ENCODE measurements at regions of chr3 and their contacts with region 1.

Region 1: DNA sequence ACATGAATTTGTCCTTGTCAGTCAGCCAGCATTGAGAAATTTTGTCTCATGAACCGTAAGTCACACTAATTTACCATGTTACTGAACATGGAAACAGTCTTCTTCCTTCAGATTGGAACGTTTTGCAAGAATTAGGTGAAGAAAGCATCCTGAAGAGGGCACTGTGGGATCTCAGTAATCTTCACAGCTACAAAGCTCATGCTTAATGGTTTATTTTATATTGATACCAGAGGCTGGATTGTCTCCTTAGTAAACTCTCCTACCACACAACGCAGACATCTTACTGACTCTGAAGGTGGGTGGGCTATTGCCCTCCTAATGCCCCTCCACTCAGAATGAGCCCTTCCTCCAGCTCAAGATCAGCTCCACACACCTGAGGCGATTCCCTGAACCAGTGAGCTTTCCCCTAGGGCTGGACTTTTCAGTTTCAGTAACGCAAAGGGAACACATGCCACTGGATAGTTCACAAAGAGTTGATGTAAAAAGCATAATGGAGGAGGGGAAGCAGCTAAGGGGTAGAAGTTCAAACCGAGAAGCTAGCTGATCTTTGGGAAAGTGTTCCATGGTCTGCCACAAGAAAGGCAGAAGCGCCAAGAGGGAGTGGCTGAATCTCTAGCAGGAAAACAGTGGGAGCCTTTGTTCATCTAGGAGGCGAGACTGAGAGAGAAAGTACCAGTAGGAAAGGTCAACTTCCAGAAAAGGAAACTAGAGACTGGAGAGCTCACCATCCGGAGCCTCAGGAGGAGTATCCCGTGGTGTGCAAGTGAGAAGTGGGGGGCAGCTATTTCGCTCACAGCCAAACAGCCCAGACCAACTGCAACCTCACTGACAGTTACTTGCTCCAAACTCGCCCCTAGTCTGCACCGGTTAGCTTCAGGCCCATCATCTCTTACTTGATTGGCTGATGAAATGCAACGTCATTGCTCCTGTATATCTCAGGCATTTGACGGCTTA is at the start of gene SLC9C1:
- DNase-seq: peak in 7 of 9 donors; percentile 32 to 66 (median 49)
- ATAC-seq: peak; percentile 84
- H3K4me3 ChIP-seq: peak within 1 kb of the TSS; percentile 25
- H3K4me3 Mint-ChIP-seq: peak within 1 kb of the TSS; percentile 49 to 80 (median 70)
- H3K27ac ChIP-seq: no peak within 1 kb of the TSS
- H3K27ac Mint-ChIP-seq: peak within 1 kb of the TSS; percentile 4 to 83 (median 56)
- H3K4me1 ChIP-seq: no peaks in the 10 kb centered on the region
- H3K4me1 Mint-ChIP-seq: peaks cover 17 to 37% (median 27%) of the 10 kb centered on the region in 7 donors
- H3K27me3 ChIP-seq: no peaks in the 10 kb centered on the region
- H3K27me3 Mint-ChIP-seq: no peaks in the 10 kb centered on the region
- total RNA-seq, gene SLC9C1: not detected

Region 2: GRCh38 chr3:112128843-112129727 is 164.6 kb before region 1 on chr3:
- CTCF ChIA-PET with region 1: interaction called, 7 read pairs
- POLR2A ChIA-PET with region 1: interaction called, 3 read pairs
- intact Hi-C with region 1: loop called in 1 of 2 experiments (anchors 5 kb)
- DNase-seq: peak in 8 of 9 donors; percentile 39 to 88 (median 83)
- ATAC-seq: peak; percentile 82
- H3K4me3 ChIP-seq: no peak overlapping the region
- H3K4me3 Mint-ChIP-seq: peak overlapping the region; percentile 23 to 100 (median 64)
- H3K27ac ChIP-seq: peak overlapping the region; percentile 82
- H3K27ac Mint-ChIP-seq: peak overlapping the region; percentile 87 to 95 (median 93)
- H3K4me1 ChIP-seq: peaks cover 41 to 72% of the 10 kb centered on the region in 2 donors
- H3K4me1 Mint-ChIP-seq: peaks cover 49 to 92% (median 90%) of the 10 kb centered on the region in 7 donors
- H3K27me3 ChIP-seq: no peaks in the 10 kb centered on the region
- H3K27me3 Mint-ChIP-seq: no peaks in the 10 kb centered on the region

Region 3: GRCh38 chr3:112303764-112304325 is 10.2 kb after region 1 on chr3:
- CTCF ChIA-PET with region 1: interaction called, 24 read pairs
- POLR2A ChIA-PET with region 1: interaction called, 10 read pairs
- intact Hi-C with region 1: loop called in 1 of 2 experiments (anchors 1 kb)
- DNase-seq: peak in 7 of 9 donors; percentile 34 to 59 (median 43)
- ATAC-seq: peak; percentile 75
- H3K4me3 ChIP-seq: peak overlapping the region; percentile 82
- H3K4me3 Mint-ChIP-seq: no peak overlapping the region
- H3K27ac ChIP-seq: peak overlapping the region; percentile 61
- H3K27ac Mint-ChIP-seq: no peak overlapping the region
- H3K4me1 ChIP-seq: peaks cover 5 to 18% of the 10 kb centered on the region in 2 donors
- H3K4me1 Mint-ChIP-seq: peaks cover 0 to 3% (median under 1%) of the 10 kb centered on the region in 7 donors
- H3K27me3 ChIP-seq: no peaks in the 10 kb centered on the region
- H3K27me3 Mint-ChIP-seq: no peaks in the 10 kb centered on the region

Region 4: DNA sequence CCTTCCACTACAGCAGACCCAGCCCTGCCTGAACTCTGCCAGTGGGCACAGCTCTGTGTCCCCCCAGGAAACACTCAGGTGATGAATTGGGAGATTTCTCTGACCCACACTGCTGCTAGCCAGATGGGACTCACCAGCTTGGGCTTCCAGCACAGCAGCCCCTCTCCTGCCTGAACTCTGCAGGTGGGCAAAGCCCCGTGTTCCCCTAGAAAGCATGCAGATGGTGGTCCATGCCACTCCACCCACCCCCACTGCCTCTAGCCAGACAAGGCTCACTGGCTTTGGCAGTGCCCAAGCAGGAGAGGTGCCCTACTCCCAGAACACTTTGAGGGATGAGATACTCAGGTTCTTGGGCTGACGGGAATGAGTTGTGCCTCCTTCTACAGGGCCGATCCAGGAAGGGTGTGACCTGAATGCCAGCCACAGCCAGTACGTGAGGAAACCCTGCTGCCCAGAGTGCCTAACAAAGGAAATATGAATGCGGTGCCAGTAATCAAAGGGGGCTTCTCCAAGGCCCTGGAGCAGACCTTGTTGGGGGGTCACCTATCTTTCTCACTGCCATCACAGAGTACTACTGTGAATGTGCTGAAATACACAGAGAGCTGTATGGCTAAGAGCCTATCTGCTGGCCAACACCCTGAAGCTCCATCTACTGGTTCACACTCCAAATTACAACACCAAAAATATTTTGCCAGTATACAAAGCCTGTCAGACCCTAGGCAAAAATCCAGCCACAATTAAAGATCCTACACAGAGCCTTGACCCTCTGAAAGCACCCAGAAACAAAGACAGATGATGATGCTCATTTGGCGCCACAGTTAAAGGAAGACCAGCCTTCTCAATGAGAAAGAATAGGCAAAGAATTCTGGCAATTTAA is 143.7 kb after region 1 on chr3:
- CTCF ChIA-PET with region 1: interaction called, 3 read pairs
- POLR2A ChIA-PET with region 1: no interaction called
- intact Hi-C with region 1: loop called in 1 of 2 experiments (anchors 1 kb)
- DNase-seq: peak in 4 of 9 donors; percentile 8 to 23 (median 14)
- ATAC-seq: peak; percentile 83
- H3K4me3 ChIP-seq: peak overlapping the region; percentile 9
- H3K4me3 Mint-ChIP-seq: no peak overlapping the region
- H3K27ac ChIP-seq: no peak overlapping the region
- H3K27ac Mint-ChIP-seq: peak overlapping the region in 2 of 9 donors; percentile 35 to 53
- H3K4me1 ChIP-seq: peaks cover 0 to 7% of the 10 kb centered on the region in 2 donors
- H3K4me1 Mint-ChIP-seq: peaks cover 5 to 29% (median 16%) of the 10 kb centered on the region in 7 donors
- H3K27me3 ChIP-seq: no peaks in the 10 kb centered on the region
- H3K27me3 Mint-ChIP-seq: no peaks in the 10 kb centered on the region

Region 5: DNA sequence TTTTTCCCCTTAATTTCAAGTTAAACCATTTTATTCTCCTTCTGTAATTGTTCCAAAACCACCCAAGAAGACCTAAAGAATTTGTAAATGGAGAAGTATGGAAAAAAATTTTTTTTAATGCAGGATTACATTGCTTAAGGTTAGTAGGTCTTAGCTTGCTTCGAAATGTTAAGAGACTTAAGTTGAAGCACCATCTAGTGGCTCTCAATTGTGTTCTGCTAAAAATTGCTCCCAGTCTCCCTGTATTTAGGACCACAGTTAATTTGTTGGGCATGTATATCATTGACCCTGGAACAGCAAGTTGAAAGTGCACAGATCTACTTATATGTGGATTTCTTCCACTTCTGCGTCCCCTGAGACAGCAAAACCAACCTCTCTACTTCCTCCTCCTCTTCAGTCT is 520.6 kb after region 1 on chr3:
- CTCF ChIA-PET with region 1: no interaction called
- POLR2A ChIA-PET with region 1: no interaction called
- intact Hi-C with region 1: no loop called
- DNase-seq: no peak
- ATAC-seq: no peak
- H3K4me3 ChIP-seq: no peak overlapping the region
- H3K4me3 Mint-ChIP-seq: no peak overlapping the region
- H3K27ac ChIP-seq: no peak overlapping the region
- H3K27ac Mint-ChIP-seq: no peak overlapping the region
- H3K4me1 ChIP-seq: no peaks in the 10 kb centered on the region
- H3K4me1 Mint-ChIP-seq: peaks cover 18 to 28% (median 23%) of the 10 kb centered on the region in 7 donors
- H3K27me3 ChIP-seq: no peaks in the 10 kb centered on the region
- H3K27me3 Mint-ChIP-seq: peaks cover 0 to 3% (median 0%) of the 10 kb centered on the region in 5 donors

Region 6: GRCh38 chr3:113287803-113288648 is 994.4 kb after region 1 on chr3:
- CTCF ChIA-PET with region 1: no interaction called
- POLR2A ChIA-PET with region 1: no interaction called
- intact Hi-C with region 1: loop called in 1 of 2 experiments (anchors 5 kb)
- DNase-seq: peak in 6 of 9 donors; percentile 9 to 57 (median 40)
- ATAC-seq: peak; percentile 60
- H3K4me3 ChIP-seq: no peak overlapping the region
- H3K4me3 Mint-ChIP-seq: no peak overlapping the region
- H3K27ac ChIP-seq: no peak overlapping the region
- H3K27ac Mint-ChIP-seq: no peak overlapping the region
- H3K4me1 ChIP-seq: no peaks in the 10 kb centered on the region
- H3K4me1 Mint-ChIP-seq: peaks cover 0 to 4% (median 0%) of the 10 kb centered on the region in 7 donors
- H3K27me3 ChIP-seq: no peaks in the 10 kb centered on the region
- H3K27me3 Mint-ChIP-seq: no peaks in the 10 kb centered on the region

Measured in naive thymus-derived CD4-positive, alpha-beta T cell (primary cell).